ENCODE measurements at regions of chr5 and their contacts with region 1.

Region 1: GRCh38 chr5:151740336-151740942 is 18.0 kb downstream of the ATOX1 start:
- DNase-seq: peak; percentile 56
- ATAC-seq: peak; percentile 61
- H3K4me3 Mint-ChIP-seq: no peak overlapping the region; the same call in 1 of the 2 replicates
- H3K27ac Mint-ChIP-seq: peak overlapping the region; percentile 89
- H3K4me1 Mint-ChIP-seq: peaks cover 17% of the 10 kb centered on the region
- H3K27me3 Mint-ChIP-seq: no peaks in the 10 kb centered on the region
- CTCF ChIP-seq: peak; percentile 92

Region 2: DNA sequence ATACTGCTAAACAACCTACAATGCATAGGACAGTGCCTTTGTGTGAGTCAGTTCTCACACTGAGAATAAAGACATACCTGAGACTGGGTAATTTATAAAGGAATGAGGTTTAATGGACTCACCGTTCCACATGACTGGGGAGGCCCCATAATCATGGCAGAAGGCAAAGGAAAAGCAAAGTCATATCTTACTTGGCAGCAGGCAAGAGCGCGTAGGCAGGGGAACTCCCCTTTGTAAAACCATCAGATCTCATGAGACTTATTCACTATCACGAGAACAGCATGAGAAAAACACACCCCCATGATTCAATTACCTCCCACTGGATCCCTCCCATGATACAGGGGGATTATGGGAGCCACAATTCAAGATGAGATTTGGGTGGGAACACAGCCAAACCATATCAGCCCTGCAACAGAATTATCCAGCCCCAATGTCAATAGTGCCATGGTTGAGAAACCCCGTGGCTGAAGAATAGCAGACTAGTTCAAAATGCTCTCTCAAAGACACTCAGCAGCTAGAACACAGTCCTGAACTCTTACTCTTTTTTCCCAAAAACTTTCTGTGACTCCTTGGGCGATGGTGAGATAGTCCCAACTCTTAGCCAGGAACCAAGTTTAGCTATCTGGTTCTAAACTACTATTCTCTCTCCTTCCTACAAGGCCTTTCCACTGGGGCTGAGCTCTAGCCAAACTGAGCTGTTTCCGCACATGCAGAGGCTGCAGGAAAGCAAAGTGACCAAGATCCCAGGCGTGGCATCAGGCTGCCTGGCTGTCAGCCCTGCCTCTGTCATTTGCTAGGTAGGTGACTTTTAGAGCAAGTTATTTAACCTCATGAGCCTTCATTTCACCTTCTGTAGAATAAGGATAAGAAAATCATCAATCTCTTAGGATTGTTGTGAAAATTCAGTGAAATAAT is 171.1 kb before region 1 on chr5:
- CTCF ChIA-PET with region 1: interaction called, 10 read pairs
- POLR2A ChIA-PET with region 1: no interaction called
- DNase-seq: no peak
- ATAC-seq: no peak
- H3K4me3 Mint-ChIP-seq: no peak overlapping the region
- H3K27ac Mint-ChIP-seq: no peak overlapping the region
- H3K4me1 Mint-ChIP-seq: peaks cover 13% of the 10 kb centered on the region
- H3K27me3 Mint-ChIP-seq: peaks cover 48% of the 10 kb centered on the region
- CTCF ChIP-seq: no peak

Region 3: DNA sequence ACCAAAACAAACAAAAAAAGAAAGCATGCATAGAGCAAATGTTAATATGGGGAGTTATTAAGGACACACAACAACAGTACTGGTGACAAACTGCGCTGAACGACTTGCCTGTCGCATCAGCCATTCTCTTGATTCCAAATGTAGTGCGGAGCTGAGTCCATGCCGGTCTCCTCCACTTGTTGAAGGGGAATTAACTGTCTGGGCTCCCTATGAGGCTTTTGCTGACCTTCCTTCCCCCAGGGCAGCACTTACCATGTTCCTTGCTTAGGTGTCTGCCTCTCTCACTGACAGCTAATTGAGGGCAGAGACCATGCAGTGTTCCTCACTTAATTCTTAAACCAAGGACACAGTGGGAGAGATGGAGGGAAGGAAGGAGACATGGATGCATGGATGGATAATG is 108.5 kb before region 1 on chr5:
- CTCF ChIA-PET with region 1: no interaction called
- POLR2A ChIA-PET with region 1: no interaction called
- DNase-seq: no peak
- ATAC-seq: no peak
- H3K4me3 Mint-ChIP-seq: no peak overlapping the region
- H3K27ac Mint-ChIP-seq: no peak overlapping the region
- H3K4me1 Mint-ChIP-seq: 0 out of 2 replicates have a peak, but pooled peaks cover 4% of the 10 kb centered on the region
- H3K27me3 Mint-ChIP-seq: peaks cover 19% of the 10 kb centered on the region
- CTCF ChIP-seq: no peak

Region 4: DNA sequence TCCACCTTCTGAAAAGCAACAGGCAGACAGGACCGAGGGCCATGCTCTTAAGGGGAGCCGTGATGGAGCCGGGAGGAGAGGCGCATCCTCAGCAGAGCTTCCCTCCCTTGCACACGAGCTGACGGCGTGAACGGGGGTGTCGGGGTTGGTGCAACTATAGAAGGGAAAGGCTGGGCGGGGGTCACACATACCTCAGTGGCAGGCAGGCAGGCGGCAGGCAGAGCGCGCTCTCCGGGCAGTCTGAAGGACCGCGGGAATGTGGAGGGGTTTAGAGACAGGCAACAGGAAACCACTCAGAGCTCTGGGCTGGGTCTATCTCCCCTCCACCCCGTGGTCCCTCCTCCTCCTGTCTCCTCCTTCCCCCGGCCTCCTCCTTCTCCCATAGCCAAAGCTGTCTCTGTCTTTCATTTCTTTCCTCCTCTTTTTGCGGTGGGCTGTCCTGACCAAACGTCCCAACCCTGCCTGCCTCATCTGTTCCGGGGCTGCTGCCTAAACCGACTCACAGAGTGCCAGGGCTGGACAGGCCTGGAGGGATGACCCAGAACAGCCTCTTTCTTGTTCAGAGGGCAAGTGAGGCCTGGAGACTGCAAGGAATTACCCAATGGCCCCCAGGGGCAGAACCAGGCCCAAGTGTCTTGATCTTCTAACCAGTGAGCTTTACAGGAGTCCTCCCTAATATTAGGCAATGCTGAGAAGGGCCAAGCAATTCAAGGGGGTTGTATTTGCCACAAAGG is 53.6 kb before region 1 on chr5 and contains the start of gene SPARC:
- CTCF ChIA-PET with region 1: interaction called, 23 read pairs
- POLR2A ChIA-PET with region 1: interaction called, 6 read pairs
- DNase-seq: peak; percentile 78
- ATAC-seq: peak; percentile 93
- H3K4me3 Mint-ChIP-seq: peak within 1 kb of the TSS; percentile 87
- H3K27ac Mint-ChIP-seq: peak within 1 kb of the TSS; percentile 84
- H3K4me1 Mint-ChIP-seq: peaks cover 41% of the 10 kb centered on the region
- H3K27me3 Mint-ChIP-seq: no peaks in the 10 kb centered on the region
- CTCF ChIP-seq: no peak
- total RNA-seq, gene SPARC: 357 to 418 TPM (median 358 TPM) in 3 replicates

Region 5: DNA sequence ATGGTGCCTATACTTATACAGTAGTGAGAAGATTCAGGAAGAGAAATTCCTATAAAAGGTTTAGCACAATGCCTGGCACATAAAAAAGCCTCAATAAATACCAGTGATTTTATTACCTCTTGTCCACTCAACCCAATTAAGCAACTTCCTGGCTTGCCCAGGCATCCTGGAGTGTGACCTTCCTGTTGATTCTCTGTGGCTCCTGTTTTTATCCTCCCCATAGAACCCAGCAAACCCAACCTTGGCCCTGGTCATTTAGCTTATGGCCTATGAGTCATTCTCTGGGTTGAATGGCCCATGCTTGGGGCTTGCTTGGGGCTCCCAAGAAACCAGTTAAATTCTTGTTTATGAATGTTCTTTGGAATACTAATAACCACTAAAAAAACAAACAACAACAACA is 32.3 kb before region 1 on chr5:
- CTCF ChIA-PET with region 1: interaction called, 16 read pairs
- POLR2A ChIA-PET with region 1: no interaction called
- DNase-seq: no peak
- ATAC-seq: peak; percentile 46
- H3K4me3 Mint-ChIP-seq: no peak overlapping the region
- H3K27ac Mint-ChIP-seq: no peak overlapping the region
- H3K4me1 Mint-ChIP-seq: peaks cover 13% of the 10 kb centered on the region
- H3K27me3 Mint-ChIP-seq: no peaks in the 10 kb centered on the region
- CTCF ChIP-seq: no peak

Region 6: GRCh38 chr5:151758430-151759241 is 18.2 kb after region 1 on chr5 and contains the start of gene ATOX1:
- CTCF ChIA-PET with region 1: interaction called, 28 read pairs
- POLR2A ChIA-PET with region 1: no interaction called
- DNase-seq: peak; percentile 93
- ATAC-seq: peak; percentile 96
- H3K4me3 Mint-ChIP-seq: peak within 1 kb of the TSS; percentile 84
- H3K27ac Mint-ChIP-seq: peak within 1 kb of the TSS; percentile 94
- H3K4me1 Mint-ChIP-seq: peaks cover 39% of the 10 kb centered on the region
- H3K27me3 Mint-ChIP-seq: no peaks in the 10 kb centered on the region
- CTCF ChIP-seq: no peak
- total RNA-seq, gene ATOX1: 76.4 to 79.3 TPM (median 77.4 TPM) in 3 replicates

Region 7: GRCh38 chr5:151896031-151896691 is 155.7 kb after region 1 on chr5:
- CTCF ChIA-PET with region 1: no interaction called
- POLR2A ChIA-PET with region 1: no interaction called
- DNase-seq: no peak
- ATAC-seq: peak; percentile 80
- H3K4me3 Mint-ChIP-seq: no peak overlapping the region
- H3K27ac Mint-ChIP-seq: no peak overlapping the region
- H3K4me1 Mint-ChIP-seq: peaks cover 10% of the 10 kb centered on the region
- H3K27me3 Mint-ChIP-seq: peaks cover 70% of the 10 kb centered on the region
- CTCF ChIP-seq: no peak

Measured in WTC11 (cell line).